ENCODE measurements at regions of chr15 and their contacts with region 1.

Region 1: GRCh38 chr15:38690689-38691332 is 126.2 kb upstream of the RASGRP1 start:
- DNase-seq: peak; percentile 46
- H3K4me3 ChIP-seq: no peak overlapping the region
- H3K27ac ChIP-seq: no peak overlapping the region
- H3K27me3 ChIP-seq: peaks cover 2% of the 10 kb centered on the region
- CTCF ChIP-seq: peak; percentile 85

Region 2: DNA sequence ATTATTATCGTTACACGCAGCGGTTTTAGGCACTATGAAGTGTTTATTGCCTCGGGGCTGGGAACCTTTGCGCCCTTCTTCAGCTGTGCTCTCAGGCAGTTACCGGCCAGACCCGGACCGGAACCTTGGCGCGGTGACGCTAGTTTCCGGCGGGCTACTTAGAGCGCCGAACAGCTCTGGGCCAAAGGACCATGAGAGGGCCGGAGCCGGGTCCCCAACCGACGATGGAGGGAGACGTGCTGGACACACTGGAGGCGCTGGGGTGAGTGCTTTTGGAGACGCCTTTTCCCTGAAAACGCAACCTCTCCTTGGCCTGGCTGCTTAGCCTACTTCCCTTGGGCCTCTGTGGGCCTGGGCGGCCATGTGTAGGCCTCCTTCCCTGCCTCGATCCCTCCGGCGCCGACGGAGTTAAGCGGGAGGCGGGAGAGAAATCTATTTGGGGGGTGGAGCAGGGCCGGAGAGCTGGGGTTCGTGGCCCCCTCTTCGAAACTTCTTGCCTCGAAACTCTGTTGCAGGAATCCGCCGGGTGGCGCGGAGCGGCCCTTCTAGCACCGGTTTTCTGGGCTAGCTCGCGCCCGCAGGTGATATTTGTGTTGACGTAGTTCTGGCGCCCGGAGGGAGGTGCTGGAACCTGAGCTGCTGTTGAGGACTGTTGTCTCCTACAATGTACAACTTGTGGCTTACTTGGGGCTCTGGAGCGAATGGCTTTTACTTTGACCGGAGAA is 236.7 kb before region 1 on chr15 and contains the start of gene FAM98B:
- CTCF ChIA-PET with region 1: interaction called, 13 read pairs
- POLR2A ChIA-PET with region 1: no interaction called
- DNase-seq: peak; percentile 69
- H3K4me3 ChIP-seq: peak within 1 kb of the TSS; percentile 92
- H3K27ac ChIP-seq: peak within 1 kb of the TSS; percentile 85
- H3K27me3 ChIP-seq: no peaks in the 10 kb centered on the region
- CTCF ChIP-seq: no peak; the same call in none of the 2 replicates
- polyA plus RNA-seq, gene FAM98B: 11.4 and 19.6 TPM in 2 replicates

Region 3: GRCh38 chr15:38474155-38474757 is 216.6 kb before region 1 on chr15:
- CTCF ChIA-PET with region 1: interaction called, 45 read pairs
- POLR2A ChIA-PET with region 1: no interaction called
- DNase-seq: no peak
- H3K4me3 ChIP-seq: no peak overlapping the region
- H3K27ac ChIP-seq: no peak overlapping the region
- H3K27me3 ChIP-seq: no peaks in the 10 kb centered on the region
- CTCF ChIP-seq: peak; percentile 84

Region 4: GRCh38 chr15:38479266-38479665 is 211.5 kb before region 1 on chr15:
- CTCF ChIA-PET with region 1: interaction called, 45 read pairs
- POLR2A ChIA-PET with region 1: no interaction called
- DNase-seq: no peak
- H3K4me3 ChIP-seq: no peak overlapping the region
- H3K27ac ChIP-seq: no peak overlapping the region
- H3K27me3 ChIP-seq: no peaks in the 10 kb centered on the region
- CTCF ChIP-seq: no peak

Region 5: GRCh38 chr15:38521316-38521715 is 169.5 kb before region 1 on chr15:
- CTCF ChIA-PET with region 1: no interaction called
- POLR2A ChIA-PET with region 1: no interaction called
- DNase-seq: no peak
- H3K4me3 ChIP-seq: no peak overlapping the region
- H3K27ac ChIP-seq: no peak overlapping the region
- H3K27me3 ChIP-seq: no peaks in the 10 kb centered on the region
- CTCF ChIP-seq: no peak

Region 6: GRCh38 chr15:38672814-38673670 is 17.8 kb before region 1 on chr15:
- CTCF ChIA-PET with region 1: interaction called, 10 read pairs
- POLR2A ChIA-PET with region 1: no interaction called
- DNase-seq: no peak
- H3K4me3 ChIP-seq: no peak overlapping the region
- H3K27ac ChIP-seq: no peak overlapping the region
- H3K27me3 ChIP-seq: peaks cover 36% of the 10 kb centered on the region
- CTCF ChIP-seq: no peak